ENCODE measurements at regions of chr20 and their contacts with region 1.

Region 1: DNA sequence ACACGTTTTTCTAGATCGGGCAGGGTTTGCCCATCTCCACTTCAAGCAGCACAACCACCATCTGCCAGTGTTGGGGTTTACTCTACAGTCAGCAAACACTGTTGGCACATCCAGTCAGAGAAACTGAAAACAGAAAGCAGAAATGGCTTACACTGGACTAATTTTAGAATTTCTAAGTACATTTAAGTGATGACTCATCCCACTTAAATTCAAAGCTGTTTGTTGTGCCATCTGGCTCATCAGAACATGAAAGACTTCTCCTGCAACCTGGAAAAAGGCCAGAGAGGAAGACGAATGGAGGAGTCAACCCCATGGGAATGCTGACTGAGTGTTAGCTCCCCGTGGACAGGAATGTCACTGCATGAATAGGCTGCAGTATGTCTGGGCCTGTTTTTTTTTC is 21.8 kb downstream of the FAM209B start:
- DNase-seq: no peak
- H3K4me3 ChIP-seq: no peak overlapping the region
- H3K27ac ChIP-seq: peak overlapping the region in 3 of 4 donors; percentile 32 to 72 (median 33)
- H3K4me1 ChIP-seq: peaks cover 0 to 45% (median 7%) of the 10 kb centered on the region in 3 donors
- H3K27me3 ChIP-seq: no peaks in the 10 kb centered on the region
- CTCF ChIP-seq: peak in 3 of 6 experiments; percentile 20 to 56 (median 42)
- POLR2A ChIP-seq: peak in 1 of 4 donors; percentile 9

Region 2: GRCh38 chr20:56974499-56975236 is 419.8 kb after region 1 on chr20:
- intact Hi-C with region 1: loop called (anchors 10 kb)
- DNase-seq: no peak
- H3K4me3 ChIP-seq: peak overlapping the region in 3 of 4 donors; percentile 4 to 38 (median 8)
- H3K27ac ChIP-seq: peak overlapping the region in 1 of 4 donors; percentile 62
- H3K4me1 ChIP-seq: peaks cover 0 to 17% (median 3%) of the 10 kb centered on the region in 3 donors
- H3K27me3 ChIP-seq: peaks cover 0 to 66% (median 0%) of the 10 kb centered on the region in 4 donors
- CTCF ChIP-seq: peak; percentile 27 to 87 (median 66)
- POLR2A ChIP-seq: no peak

Region 3: GRCh38 chr20:57056651-57057050 is 501.8 kb after region 1 on chr20:
- intact Hi-C with region 1: loop called (anchors 10 kb)
- DNase-seq: no peak
- H3K4me3 ChIP-seq: no peak overlapping the region
- H3K27ac ChIP-seq: no peak overlapping the region
- H3K4me1 ChIP-seq: peaks cover 0 to 16% (median 0%) of the 10 kb centered on the region in 3 donors
- H3K27me3 ChIP-seq: peaks cover 0 to 7% (median 0%) of the 10 kb centered on the region in 4 donors
- CTCF ChIP-seq: no peak
- POLR2A ChIP-seq: no peak